Right cardiac atrium (tissue), 5 donors: ENCODE measurements at regions of chr12 and their contacts with region 1.

Region 1: DNA sequence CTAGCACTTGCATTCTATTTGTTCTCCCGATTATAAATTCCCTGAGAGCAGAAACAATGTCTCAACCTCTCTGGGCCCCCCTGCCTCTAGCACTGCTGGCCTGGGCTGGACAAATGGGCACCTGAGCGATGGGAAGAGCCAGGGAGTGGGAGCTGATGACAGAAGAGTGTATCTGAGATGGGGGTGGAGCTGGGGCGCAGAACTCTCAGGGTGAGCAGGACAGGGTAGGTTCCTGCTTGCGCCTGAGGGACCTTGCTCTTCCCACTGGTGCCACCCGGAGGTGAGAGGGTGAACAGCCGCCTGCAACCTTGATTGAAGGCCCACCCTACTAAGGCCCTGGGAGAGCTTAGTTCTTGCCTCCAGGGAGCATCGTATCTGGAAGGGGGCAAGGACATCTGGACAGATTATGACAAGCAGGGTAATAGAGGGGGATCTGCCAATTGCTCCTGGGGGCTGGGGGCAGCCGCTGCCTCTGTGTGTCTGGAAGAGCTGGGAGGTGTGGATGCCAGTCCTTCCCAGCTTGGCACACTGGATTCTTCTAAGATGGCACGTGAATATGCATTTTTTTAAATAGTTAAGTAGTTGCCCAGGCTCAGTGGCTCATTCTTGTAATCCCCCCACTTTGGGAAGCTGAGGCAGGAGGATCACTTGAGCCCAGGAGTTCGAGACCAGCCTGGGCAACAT is 43.0 kb upstream of the TSPAN9 start:
- DNase-seq: peak; percentile 65 to 86 (median 85)
- ATAC-seq: peak; percentile 68 to 76
- H3K4me3 ChIP-seq: no peak overlapping the region
- H3K27ac ChIP-seq: no peak overlapping the region
- H3K4me1 ChIP-seq: no peaks in the 10 kb centered on the region
- H3K27me3 ChIP-seq: no peaks in the 10 kb centered on the region

Region 2: GRCh38 chr12:2853626-2854025 is 180.6 kb before region 1 on chr12:
- intact Hi-C with region 1: loop called in 3 of 4 experiments (anchors 10 kb)
- DNase-seq: peak; percentile 88 to 96 (median 94)
- ATAC-seq: peak; percentile 74 to 87
- H3K4me3 ChIP-seq: no peak overlapping the region
- H3K27ac ChIP-seq: no peak overlapping the region
- H3K4me1 ChIP-seq: no peaks in the 10 kb centered on the region
- H3K27me3 ChIP-seq: no peaks in the 10 kb centered on the region

Region 3: GRCh38 chr12:2879853-2880252 is 154.4 kb before region 1 on chr12:
- intact Hi-C with region 1: loop called (anchors 5 to 10 kb)
- DNase-seq: no peak
- ATAC-seq: no peak
- H3K4me3 ChIP-seq: no peak overlapping the region
- H3K27ac ChIP-seq: no peak overlapping the region
- H3K4me1 ChIP-seq: peaks cover 4% of the 10 kb centered on the region
- H3K27me3 ChIP-seq: no peaks in the 10 kb centered on the region

Region 4: DNA sequence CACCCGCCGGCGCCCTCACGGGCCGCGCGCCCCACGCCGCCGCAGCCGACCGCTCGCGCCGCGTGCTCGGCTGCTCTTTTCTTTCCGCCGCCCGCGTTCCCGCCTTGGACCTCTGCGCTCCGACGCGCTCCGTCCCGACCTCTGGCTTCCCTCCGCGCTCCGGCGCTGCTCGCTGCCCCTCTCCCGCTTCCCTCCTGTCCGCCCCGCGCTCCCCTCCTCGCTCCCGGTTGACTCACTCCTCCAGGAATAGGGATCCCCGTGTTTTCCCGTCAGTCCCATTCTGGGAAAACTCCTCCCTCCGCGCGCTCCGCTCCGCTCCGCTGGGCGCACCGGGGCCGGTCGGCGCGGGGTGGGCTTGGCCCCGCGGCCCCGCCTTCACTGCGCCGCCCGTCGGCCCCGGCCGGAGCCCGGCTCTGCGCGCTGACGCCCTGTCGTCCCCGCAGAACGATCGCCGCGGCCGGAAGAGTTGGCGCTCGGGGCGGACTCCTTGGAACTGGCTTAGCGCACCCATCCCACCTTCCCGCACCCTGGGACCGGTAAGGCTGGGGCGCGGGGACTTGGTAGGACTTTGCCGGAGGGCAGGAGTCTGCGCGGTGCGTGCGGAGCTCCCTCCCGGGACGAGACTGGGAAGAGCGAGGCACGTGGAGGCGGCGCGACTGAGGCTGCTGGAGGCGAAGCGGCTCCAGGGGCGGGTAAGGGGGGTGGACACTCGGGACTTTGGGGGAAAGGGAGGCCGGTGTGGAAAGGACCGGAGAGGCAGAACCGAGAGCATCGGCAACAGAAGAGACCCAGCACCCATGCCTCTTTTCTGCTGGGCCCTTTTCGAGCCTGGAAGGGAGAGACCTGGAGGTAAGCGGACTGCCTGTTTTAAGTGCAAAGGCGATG is 74.5 kb before region 1 on chr12:
- intact Hi-C with region 1: loop called in 2 of 4 experiments (anchors 10 kb)
- DNase-seq: peak; percentile 75 to 78 (median 76)
- ATAC-seq: peak; percentile 62 to 63
- H3K4me3 ChIP-seq: peak overlapping the region; percentile 72
- H3K27ac ChIP-seq: peak overlapping the region; percentile 66
- H3K4me1 ChIP-seq: peaks cover 8% of the 10 kb centered on the region
- H3K27me3 ChIP-seq: no peaks in the 10 kb centered on the region

Region 5: DNA sequence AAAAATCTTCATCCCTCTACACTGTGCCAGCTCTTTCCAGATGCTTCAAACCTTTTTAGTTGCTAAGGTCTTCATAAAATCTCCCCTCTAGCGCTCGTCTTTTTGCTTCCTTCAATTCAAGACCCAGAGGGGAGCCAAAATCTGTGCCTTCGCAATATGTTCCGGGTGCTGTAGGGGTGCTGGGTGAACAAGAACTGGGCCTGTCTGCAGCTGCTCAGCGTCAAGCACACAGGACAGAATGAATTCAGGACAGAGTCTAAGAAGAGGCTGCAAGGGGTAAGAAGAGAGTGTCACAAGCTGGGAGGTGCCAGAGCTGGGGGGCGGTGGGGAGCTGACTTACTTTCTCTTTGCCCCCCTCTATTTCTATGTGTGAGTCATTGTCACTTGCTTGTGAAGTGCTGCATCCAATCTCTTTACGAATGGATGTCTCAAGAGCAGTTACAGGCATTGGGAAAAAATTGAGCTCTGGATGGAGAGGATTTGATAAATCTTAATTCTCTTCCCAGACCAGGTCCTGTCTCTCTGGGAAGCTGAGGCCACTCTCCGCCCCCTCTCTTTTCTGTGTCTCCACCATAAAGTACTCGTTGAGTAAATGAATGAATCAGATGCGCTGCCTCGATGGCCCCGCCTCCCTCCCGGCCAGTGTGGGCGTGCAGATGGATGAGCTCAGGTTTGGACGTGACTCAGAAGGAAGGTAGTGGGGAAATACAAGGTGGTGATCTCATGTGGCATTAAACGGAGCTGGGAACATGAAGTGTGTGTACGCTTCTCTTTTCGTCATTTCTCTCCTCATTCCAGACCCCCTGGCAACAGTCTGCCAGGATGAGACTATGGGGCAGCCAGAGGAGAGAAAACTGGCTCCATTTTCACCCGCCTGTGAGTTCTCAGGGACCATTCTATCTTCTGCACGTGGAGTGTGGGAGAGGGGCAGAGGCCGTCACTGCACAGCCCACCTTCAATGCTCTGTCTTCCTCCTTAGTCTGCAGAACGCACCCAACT is 134.3 kb after region 1 on chr12:
- intact Hi-C with region 1: no loop called
- DNase-seq: no peak
- ATAC-seq: no peak
- H3K4me3 ChIP-seq: no peak overlapping the region
- H3K27ac ChIP-seq: no peak overlapping the region
- H3K4me1 ChIP-seq: no peaks in the 10 kb centered on the region
- H3K27me3 ChIP-seq: no peaks in the 10 kb centered on the region